Posterior vena cava (tissue), 2 donors: ENCODE measurements at regions of chr7 and their contacts with region 1.

Region 1: GRCh38 chr7:55255496-55256435 is 109.4 kb upstream of the LANCL2 start:
- DNase-seq: peak; percentile 94

Region 2: DNA sequence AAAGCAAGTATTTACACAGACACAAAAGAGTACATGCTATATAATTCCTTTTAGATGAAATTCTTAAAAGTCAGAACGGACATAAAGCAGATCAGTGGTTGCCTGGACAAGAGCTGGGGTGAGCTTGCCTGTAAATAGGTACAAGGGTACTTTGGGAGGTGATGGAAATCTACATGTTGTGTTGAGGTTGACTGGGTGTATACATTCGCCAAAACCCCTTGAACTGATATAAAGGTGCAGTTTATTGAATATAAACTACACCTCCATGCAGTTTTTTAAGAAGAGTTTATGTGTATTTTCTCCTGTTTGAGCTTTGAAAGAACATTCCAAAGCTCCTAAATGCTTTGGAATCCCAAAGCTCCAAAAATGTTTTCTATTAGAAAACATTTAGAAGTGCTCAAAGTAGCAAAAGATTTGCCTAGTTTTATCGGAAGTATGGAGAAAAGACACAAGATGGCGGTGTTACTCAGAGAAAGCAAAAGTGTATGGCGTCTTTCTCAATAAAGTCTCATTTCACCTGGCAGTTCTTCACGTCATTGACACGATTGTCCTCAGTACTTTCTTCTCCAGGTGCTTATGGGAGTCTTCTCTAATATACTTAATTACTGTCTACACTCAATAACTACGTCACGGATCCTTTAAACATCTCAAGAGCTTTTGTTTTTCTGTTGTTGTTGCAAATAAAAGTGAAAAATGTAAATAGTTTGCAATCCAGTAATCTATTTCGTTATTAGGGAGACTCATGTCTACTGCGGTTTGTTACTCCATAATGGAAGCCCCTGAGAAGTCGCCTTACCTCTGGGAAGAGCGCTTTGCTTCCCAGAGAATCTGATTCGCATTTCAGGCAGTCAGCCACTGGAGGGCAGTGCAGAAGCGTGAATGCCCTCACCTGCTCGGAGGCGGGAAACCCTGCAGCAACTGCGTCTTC is 482.0 kb before region 1 on chr7:
- intact Hi-C with region 1: loop called (anchors 2 to 5 kb)
- DNase-seq: peak; percentile 89

Region 3: DNA sequence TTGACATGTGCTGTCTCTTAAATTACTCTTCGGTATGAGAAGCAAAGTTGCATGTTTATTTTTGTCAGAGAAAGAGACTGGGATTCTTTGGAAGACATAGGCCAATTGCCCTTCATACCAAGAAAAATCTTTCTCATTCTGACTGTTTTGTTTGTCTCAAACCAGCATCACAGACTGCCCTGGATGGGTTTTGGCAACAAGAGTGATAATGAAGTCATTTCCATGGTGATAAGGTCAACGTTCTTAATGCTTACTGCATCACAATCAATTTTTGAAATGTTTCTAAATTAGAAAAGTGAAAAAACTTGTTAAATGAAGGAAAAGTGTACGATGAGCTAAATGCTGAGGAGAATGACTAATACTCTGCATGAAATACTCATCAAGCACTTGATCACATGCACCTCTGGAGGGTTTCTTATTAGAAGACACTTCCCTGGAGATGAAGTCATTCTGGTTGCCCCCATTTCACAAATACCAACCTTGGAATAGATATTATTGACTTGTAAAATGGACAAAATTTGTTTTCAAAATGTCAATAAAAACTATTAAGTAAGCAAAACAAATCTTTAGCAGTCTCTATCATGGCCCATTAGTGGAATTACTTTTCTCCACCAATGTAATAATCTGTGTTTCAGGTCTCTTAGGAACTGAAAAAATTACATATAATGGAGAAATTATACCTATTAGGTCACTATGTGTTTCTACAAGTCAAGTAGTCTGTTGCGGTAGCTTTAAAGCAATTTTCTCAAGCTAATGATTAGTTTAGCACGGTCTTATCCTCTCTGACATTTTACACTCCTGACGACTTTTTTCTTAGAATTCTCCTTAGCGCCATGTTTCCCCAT is 476.8 kb before region 1 on chr7:
- intact Hi-C with region 1: loop called (anchors 2 to 5 kb)
- DNase-seq: no peak

Region 4: GRCh38 chr7:55160539-55160938 is 95.2 kb before region 1 on chr7:
- intact Hi-C with region 1: loop called in 1 of 2 experiments (anchors 5 kb)
- DNase-seq: no peak